ENCODE measurements at regions of chr10 and their contacts with region 1.

Region 1: GRCh38 chr10:34637418-34637911 is 177.6 kb downstream of the PARD3 start:
- DNase-seq: peak; percentile 67
- ATAC-seq: peak; percentile 59 to 63

Region 2: GRCh38 chr10:33193057-33193700 is 1444.3 kb before region 1 on chr10:
- intact Hi-C with region 1: loop called (anchors 5 to 10 kb)
- DNase-seq: peak; percentile 88
- ATAC-seq: peak; percentile 87 to 88

Region 3: DNA sequence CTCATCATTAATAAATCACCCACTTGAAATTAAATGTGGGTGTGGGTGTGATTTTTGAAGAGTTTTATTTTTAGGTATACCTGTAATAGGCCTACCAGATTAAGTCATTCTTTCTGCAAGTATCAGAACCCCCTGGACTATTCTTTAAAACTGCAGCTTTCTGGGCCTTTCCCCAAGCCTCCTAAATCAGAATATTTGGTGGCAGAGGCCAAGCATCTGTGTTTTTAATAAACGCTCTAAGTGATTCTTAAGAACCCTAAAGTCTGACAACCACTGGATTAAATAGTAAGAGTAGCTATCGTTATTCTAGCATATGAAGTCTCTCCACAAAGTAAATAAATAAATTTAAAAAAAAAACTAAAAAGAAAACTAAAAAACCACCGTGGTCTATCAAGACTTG is 600.0 kb before region 1 on chr10:
- intact Hi-C with region 1: no loop called
- DNase-seq: no peak
- ATAC-seq: no peak

Region 4: DNA sequence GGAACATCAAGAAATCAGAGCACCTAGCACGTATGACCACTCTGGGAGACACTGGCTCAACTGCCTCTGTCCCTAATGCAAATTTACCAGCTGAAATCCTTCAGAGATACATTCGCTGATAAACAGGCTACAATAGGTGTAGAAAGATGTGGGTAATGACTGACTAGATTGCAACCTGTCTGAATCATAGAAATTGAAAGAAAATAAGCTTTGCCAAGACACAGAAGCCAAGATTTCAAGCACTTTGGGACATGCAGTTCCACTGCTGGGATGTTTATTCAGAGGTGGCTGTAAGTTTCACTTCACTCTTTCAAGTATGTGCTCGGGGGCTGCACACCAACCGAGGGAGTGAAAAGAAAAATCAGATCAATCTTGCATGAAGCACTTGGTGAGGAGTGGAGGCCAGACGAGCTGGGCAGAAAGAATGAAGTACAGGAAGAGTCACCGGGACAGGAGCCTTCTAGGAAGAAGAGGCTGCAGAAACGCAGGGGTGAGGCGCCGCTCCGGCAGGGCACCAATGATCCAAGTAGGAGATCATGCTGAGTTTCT is 99.1 kb before region 1 on chr10:
- intact Hi-C with region 1: loop called in 1 of 2 experiments (anchors 5 kb)
- DNase-seq: no peak
- ATAC-seq: no peak

Measured in left cardiac atrium (tissue), 4 donors.